ENCODE measurements at regions of chr12 and their contacts with region 1.

Region 1: DNA sequence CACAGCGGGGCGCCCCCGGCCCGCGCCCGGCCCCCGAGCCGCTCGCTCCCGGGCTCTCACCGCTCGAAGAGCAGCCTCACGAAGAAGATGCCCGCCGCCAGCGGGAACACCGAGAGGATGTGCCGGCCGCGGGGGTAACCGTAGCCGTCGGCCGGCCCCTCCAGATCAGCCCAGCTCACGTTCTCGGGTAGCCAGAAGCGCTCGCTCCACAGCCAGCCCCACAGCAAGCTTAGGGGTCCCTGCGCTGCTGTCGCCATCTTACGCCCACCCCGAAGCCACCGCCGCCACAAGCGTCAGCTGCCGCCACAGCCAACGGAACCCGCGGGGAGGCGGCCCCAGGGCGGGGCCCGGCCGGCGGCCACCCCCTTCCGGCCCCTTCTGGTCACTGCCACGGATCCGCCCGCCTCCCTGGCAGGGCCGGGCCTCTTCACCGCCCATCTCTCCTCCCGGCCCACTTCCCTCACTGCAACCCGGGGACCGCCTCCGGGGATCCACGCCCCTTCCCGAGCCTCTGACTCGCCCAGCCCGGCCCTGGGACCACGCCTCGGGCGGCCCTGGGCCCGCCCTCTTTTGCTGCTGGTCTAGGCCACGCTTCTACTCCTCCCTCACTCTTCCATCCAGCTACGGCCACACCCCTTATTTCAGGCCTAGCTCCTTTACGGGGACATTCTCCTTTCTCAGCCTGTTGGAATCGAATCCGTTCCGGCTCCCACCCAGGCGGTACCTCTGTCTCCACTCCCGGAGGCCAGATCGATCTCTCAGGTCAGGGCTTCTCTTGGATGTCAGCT is at the start of gene CERS5:
- DNase-seq: peak; percentile 97
- H3K4me3 ChIP-seq: peak within 1 kb of the TSS; percentile 51 to 91 (median 82)
- H3K27ac ChIP-seq: peak within 1 kb of the TSS; percentile 74
- H3K4me1 ChIP-seq: peaks cover 0 to 2% (median 0%) of the 10 kb centered on the region in 4 experiments; a peak in 2 of 7 replicates
- H3K27me3 ChIP-seq: no peaks in the 10 kb centered on the region
- CTCF ChIP-seq: no peak; a peak in 1 of 4 replicates
- EP300 ChIP-seq: no peak
- POLR2A ChIP-seq: peak; percentile 62 to 88
- RAD21 ChIP-seq: no peak
- total RNA-seq, gene CERS5: 58.5 and 69.2 TPM in 2 replicates

Region 2: DNA sequence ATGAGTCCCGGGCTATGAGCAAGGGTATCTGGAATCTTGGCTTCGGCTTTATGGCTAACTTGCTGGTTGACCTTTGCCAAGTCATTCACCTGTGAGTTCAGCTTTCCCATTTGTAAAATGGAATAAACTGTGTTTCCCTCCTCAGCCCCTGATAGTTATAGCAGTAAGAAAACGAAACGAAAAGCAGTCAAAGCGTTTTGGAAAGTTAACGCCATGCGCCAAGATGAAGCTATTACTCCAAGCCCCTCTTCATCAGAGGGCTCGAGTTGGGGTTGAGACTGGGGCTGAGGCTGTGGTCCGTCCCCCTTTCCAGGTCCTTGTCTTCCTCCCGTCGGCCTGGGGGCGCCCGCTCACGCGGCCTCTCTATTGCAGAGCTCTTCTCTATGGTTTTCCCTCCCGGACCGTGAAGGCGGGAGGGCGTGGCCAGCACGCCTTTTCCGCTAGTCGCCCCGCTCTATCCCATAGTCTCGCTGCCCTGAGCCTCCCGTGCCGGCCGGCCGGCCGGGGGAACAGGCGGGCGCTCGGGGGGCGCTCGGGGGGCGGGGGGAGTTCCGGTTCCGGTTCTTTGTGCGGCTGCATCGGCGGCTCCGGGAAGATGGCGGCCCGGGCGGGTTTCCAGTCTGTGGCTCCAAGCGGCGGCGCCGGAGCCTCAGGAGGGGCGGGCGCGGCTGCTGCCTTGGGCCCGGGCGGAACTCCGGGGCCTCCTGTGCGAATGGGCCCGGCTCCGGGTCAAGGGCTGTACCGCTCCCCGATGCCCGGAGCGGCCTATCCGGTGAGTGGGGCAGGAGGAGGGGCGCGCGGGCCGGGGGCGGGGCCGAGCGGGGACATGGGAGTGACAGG is 82.2 kb before region 1 on chr12 and contains the start of gene SMARCD1:
- CTCF ChIA-PET with region 1: interaction called, 15 read pairs
- POLR2A ChIA-PET with region 1: interaction called, 22 read pairs
- DNase-seq: peak; percentile 93 to 94
- H3K4me3 ChIP-seq: peak within 1 kb of the TSS; percentile 42 to 88 (median 77)
- H3K27ac ChIP-seq: peak within 1 kb of the TSS; percentile 68; the same call in 1 of the 2 replicates
- H3K4me1 ChIP-seq: peaks cover 0 to 8% (median 5%) of the 10 kb centered on the region in 4 experiments; a peak in 3 of 7 replicates
- H3K27me3 ChIP-seq: peaks cover 0 to 15% (median 8%) of the 10 kb centered on the region in 4 experiments; a peak in 4 of 7 replicates
- CTCF ChIP-seq: peak; percentile 71 to 82 (median 74)
- EP300 ChIP-seq: no peak
- POLR2A ChIP-seq: peak; percentile 57 to 62
- RAD21 ChIP-seq: no peak
- total RNA-seq, gene SMARCD1: 128 and 140 TPM in 2 replicates

Region 3: DNA sequence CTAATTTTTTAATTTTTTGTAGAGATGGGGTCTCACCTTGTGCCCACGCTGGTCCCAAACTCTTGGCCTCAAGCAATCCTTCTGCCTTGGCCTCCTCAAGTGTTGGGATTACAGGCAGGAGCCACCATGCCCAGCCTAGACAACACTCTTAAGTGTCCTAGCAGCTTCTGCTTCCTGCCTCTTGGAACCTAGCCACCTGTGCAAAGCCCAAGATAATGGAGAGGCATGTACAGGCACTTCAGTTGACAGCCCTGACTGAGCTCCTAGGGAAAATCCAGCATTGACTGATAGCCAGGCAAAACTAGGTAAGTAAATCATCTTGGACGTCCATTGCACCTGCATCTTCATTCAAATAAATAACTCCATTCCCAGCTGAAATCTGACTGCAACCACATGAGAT is 39.7 kb before region 1 on chr12:
- CTCF ChIA-PET with region 1: interaction called, 10 read pairs
- POLR2A ChIA-PET with region 1: interaction called, 10 read pairs
- DNase-seq: no peak
- H3K4me3 ChIP-seq: no peak overlapping the region
- H3K27ac ChIP-seq: no peak overlapping the region
- H3K4me1 ChIP-seq: no peaks in the 10 kb centered on the region
- H3K27me3 ChIP-seq: no peaks in the 10 kb centered on the region
- CTCF ChIP-seq: no peak
- EP300 ChIP-seq: no peak
- POLR2A ChIP-seq: no peak
- RAD21 ChIP-seq: no peak

Region 4: DNA sequence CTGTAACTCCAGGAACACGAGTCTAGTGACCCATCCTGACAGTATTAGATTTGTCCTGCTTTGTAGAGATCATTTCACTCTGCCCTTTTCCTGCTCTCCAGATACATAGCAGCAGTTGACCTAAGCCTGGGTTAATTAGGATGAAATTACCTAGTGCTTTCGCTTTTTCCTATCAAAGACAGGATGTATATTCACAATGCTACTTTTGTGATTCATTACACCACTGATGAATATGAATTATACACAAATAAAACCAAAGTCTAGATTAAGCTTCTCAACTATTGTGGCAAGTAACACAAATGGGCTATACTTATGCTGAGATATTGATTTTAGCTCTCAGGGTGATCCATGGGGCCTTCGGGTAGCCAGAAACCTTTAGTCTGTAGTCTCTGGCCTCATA is 17.9 kb before region 1 on chr12:
- CTCF ChIA-PET with region 1: interaction called, 28 read pairs
- POLR2A ChIA-PET with region 1: interaction called, 20 read pairs
- DNase-seq: no peak
- H3K4me3 ChIP-seq: no peak overlapping the region
- H3K27ac ChIP-seq: no peak overlapping the region
- H3K4me1 ChIP-seq: no peaks in the 10 kb centered on the region
- H3K27me3 ChIP-seq: no peaks in the 10 kb centered on the region
- CTCF ChIP-seq: no peak
- EP300 ChIP-seq: no peak
- POLR2A ChIP-seq: no peak
- RAD21 ChIP-seq: no peak

Region 5: GRCh38 chr12:50231346-50231745 is 64.1 kb after region 1 on chr12:
- CTCF ChIA-PET with region 1: no interaction called
- POLR2A ChIA-PET with region 1: no interaction called
- DNase-seq: no peak
- H3K4me3 ChIP-seq: no peak overlapping the region
- H3K27ac ChIP-seq: no peak overlapping the region
- H3K4me1 ChIP-seq: no peaks in the 10 kb centered on the region
- H3K27me3 ChIP-seq: no peaks in the 10 kb centered on the region
- CTCF ChIP-seq: no peak
- EP300 ChIP-seq: no peak
- POLR2A ChIP-seq: no peak
- RAD21 ChIP-seq: no peak

Region 6: GRCh38 chr12:50283229-50283923 is 116.1 kb after region 1 on chr12 and contains the start of gene LIMA1:
- CTCF ChIA-PET with region 1: no interaction called
- POLR2A ChIA-PET with region 1: interaction called, 12 read pairs
- DNase-seq: peak; percentile 73 to 96
- H3K4me3 ChIP-seq: peak within 1 kb of the TSS; percentile 50 to 80 (median 76)
- H3K27ac ChIP-seq: peak within 1 kb of the TSS; percentile 46; the same call in 1 of the 2 replicates
- H3K4me1 ChIP-seq: peaks cover 2 to 9% (median 6%) of the 10 kb centered on the region in 4 experiments; a peak in 5 of 7 replicates
- H3K27me3 ChIP-seq: no peaks in the 10 kb centered on the region
- CTCF ChIP-seq: peak; percentile 29 to 58 (median 39); a peak in 3 of 4 replicates
- EP300 ChIP-seq: no peak
- POLR2A ChIP-seq: peak; percentile 87 to 94
- RAD21 ChIP-seq: peak; percentile 26 to 43; a peak in 3 of 4 replicates
- total RNA-seq, gene LIMA1: 43.3 and 47.6 TPM in 2 replicates

Measured in H1 (cell line).